A549 (cell line): ENCODE measurements at regions of chr7 and their contacts with region 1.

Region 1: DNA sequence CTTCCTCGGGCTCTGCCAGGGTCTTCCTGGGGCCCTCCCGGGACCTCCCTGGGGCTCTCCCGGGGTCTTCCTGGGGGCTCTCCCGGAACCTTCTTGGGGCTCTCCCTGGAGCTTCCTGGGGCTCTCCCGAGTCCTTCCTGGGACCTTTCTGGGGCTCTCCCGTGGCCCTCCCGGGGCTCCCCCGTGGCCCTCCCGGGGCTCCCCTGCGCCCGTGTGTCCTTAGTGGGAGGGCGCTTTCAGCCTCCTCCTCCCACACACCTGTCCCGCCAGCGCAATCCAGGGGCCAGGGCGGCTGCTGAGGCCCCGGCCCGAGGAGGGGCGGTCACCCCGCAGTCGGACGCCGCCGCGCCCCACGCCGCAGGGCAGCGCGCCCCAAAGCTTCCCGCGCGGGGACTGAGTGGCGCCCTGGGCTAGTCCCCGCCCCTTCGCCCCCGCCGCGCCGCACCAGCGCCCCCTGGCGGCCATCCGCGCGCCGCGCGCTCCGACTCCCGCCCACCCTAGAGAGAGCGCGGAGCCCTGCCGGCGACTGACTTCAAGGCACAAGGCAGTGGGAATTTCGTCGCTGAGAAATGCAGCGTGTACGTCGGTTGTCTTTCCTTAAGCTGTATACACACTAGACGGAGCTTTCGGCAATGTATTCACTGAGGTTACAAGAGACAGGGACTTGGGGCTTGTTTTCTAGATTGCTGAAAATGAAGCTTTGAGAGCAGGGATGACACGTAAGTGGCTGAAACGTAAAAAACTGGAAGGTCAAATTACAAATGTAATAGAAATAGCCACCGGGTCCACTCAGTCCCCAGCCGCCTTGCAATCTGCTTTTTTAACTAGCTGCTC is 47.1 kb downstream of the INSIG1 start:
- DNase-seq: peak; percentile 67 to 79
- ATAC-seq: peak; percentile 83 to 96
- H3K4me3 ChIP-seq: peak overlapping the region; percentile 62
- H3K27ac ChIP-seq: peak overlapping the region; percentile 79 to 90
- H3K4me1 ChIP-seq: no peaks in the 10 kb centered on the region
- CTCF ChIP-seq: peak; percentile 98
- EP300 ChIP-seq: no peak
- POLR2A ChIP-seq: no peak
- RAD21 ChIP-seq: peak; percentile 61 to 97; a peak in 4 of 5 replicates

Region 2: GRCh38 chr7:154927624-154928143 is 417.1 kb before region 1 on chr7:
- CTCF ChIA-PET with region 1: interaction called, 64 read pairs
- POLR2A ChIA-PET with region 1: no interaction called
- DNase-seq: peak; percentile 66 to 91
- ATAC-seq: peak; percentile 72 to 82
- H3K4me3 ChIP-seq: peak overlapping the region; percentile 67
- H3K27ac ChIP-seq: peak overlapping the region; percentile 43 to 74; a peak in 5 of 6 replicates
- H3K4me1 ChIP-seq: 0 out of 3 replicates have a peak, but pooled peaks cover 4% of the 10 kb centered on the region
- CTCF ChIP-seq: peak; percentile 92
- EP300 ChIP-seq: no peak
- POLR2A ChIP-seq: no peak
- RAD21 ChIP-seq: peak; percentile 86 to 89

Region 3: GRCh38 chr7:155190688-155191087 is 154.1 kb before region 1 on chr7:
- CTCF ChIA-PET with region 1: interaction called, 68 read pairs
- POLR2A ChIA-PET with region 1: no interaction called
- DNase-seq: peak; percentile 28 to 61
- ATAC-seq: peak; percentile 75 to 87; a peak in 5 of 6 replicates
- H3K4me3 ChIP-seq: peak overlapping the region; percentile 32; the same call in 1 of the 3 replicates
- H3K27ac ChIP-seq: no peak overlapping the region
- H3K4me1 ChIP-seq: no peaks in the 10 kb centered on the region
- CTCF ChIP-seq: peak; percentile 80
- EP300 ChIP-seq: no peak
- POLR2A ChIP-seq: no peak
- RAD21 ChIP-seq: peak; percentile 86 to 89

Region 4: GRCh38 chr7:155205368-155206317 is 139.2 kb before region 1 on chr7:
- CTCF ChIA-PET with region 1: interaction called, 17 read pairs
- POLR2A ChIA-PET with region 1: no interaction called
- DNase-seq: peak; percentile 95 to 98
- ATAC-seq: peak; percentile 92 to 96
- H3K4me3 ChIP-seq: peak overlapping the region; percentile 35
- H3K27ac ChIP-seq: peak overlapping the region; percentile 69 to 84
- H3K4me1 ChIP-seq: peaks cover 21% of the 10 kb centered on the region
- CTCF ChIP-seq: no peak
- EP300 ChIP-seq: peak in 1 of 2 experiments; percentile 37; a peak in 1 of 5 replicates
- POLR2A ChIP-seq: peak; percentile 28; the same call in 1 of the 2 replicates
- RAD21 ChIP-seq: no peak; a peak in 1 of 5 replicates

Region 5: GRCh38 chr7:155305644-155305904 is 39.2 kb before region 1 on chr7:
- CTCF ChIA-PET with region 1: interaction called, 15 read pairs
- POLR2A ChIA-PET with region 1: interaction called, 4 read pairs
- DNase-seq: no peak
- ATAC-seq: no peak
- H3K4me3 ChIP-seq: no peak overlapping the region
- H3K27ac ChIP-seq: no peak overlapping the region
- H3K4me1 ChIP-seq: peaks cover 4% of the 10 kb centered on the region; the same call in 1 of the 3 replicates
- CTCF ChIP-seq: no peak
- EP300 ChIP-seq: no peak
- POLR2A ChIP-seq: no peak
- RAD21 ChIP-seq: no peak

Region 6: GRCh38 chr7:155356323-155357105 is 11.7 kb after region 1 on chr7:
- CTCF ChIA-PET with region 1: interaction called, 51 read pairs
- POLR2A ChIA-PET with region 1: no interaction called
- DNase-seq: peak; percentile 29 to 43
- ATAC-seq: peak; percentile 58 to 83; a peak in 3 of 6 replicates
- H3K4me3 ChIP-seq: no peak overlapping the region
- H3K27ac ChIP-seq: no peak overlapping the region
- H3K4me1 ChIP-seq: no peaks in the 10 kb centered on the region
- CTCF ChIP-seq: peak; percentile 58
- EP300 ChIP-seq: no peak
- POLR2A ChIP-seq: no peak
- RAD21 ChIP-seq: peak; percentile 36 to 44; a peak in 3 of 5 replicates

Region 7: GRCh38 chr7:155644178-155644970 is 299.6 kb after region 1 on chr7 and contains the start of gene RBM33:
- CTCF ChIA-PET with region 1: no interaction called
- POLR2A ChIA-PET with region 1: no interaction called
- DNase-seq: peak; percentile 90 to 93
- ATAC-seq: peak; percentile 89 to 93
- H3K4me3 ChIP-seq: peak within 1 kb of the TSS; percentile 95
- H3K27ac ChIP-seq: peak within 1 kb of the TSS; percentile 98
- H3K4me1 ChIP-seq: peaks cover 15% of the 10 kb centered on the region; the same call in 1 of the 3 replicates
- CTCF ChIP-seq: no peak
- EP300 ChIP-seq: no peak
- POLR2A ChIP-seq: peak; percentile 91
- RAD21 ChIP-seq: no peak; a peak in 2 of 5 replicates
- polyA plus RNA-seq, gene RBM33: 19.5 and 21.9 TPM in 2 replicates